ENCODE measurements at regions of chr6 and their contacts with region 1.

Region 1: DNA sequence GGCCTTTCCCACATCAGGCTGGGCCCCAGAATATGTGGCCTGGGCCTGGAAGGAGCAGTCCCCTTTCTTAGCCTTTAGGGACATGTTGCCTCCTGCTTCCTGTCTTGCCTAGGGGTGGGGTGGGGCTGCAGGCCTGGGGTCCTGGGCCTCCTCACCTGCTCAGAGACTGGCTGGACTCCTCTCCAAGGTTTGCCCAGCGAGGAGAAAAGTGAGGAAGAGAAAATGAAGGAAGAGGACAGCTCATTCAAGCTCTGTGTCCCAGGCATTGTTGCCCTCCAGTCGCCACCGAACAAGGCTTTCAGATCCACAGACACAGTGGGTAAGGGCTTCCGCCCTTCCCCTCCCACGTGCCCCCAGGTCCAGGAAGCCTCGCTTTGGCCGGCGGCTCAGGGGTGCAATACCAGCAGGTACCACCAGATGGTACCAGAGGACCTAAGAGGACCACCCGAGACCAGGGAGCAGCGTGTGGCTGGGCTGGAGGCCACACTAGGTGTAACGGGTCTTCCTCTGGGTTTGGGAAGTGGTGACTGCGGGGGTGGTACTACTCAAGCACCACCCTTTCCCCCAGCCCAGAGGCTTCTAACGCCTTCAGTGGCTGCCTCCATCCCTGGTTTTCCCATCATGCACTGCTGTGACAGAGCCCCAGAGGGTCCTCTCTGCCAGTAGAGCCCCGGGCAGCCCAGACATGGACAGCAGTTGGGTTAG is 5.5 kb upstream of the BAK1 start:
- DNase-seq: peak; percentile 78 to 89 (median 83)
- H3K4me3 ChIP-seq: no peak overlapping the region
- H3K4me3 Mint-ChIP-seq: peak overlapping the region in 7 of 8 donors; percentile 28 to 66 (median 59)
- H3K27ac ChIP-seq: peak overlapping the region; percentile 47
- H3K27ac Mint-ChIP-seq: peak overlapping the region; percentile 85 to 93 (median 89)
- H3K4me1 ChIP-seq: peaks cover 18% of the 10 kb centered on the region
- H3K4me1 Mint-ChIP-seq: peaks cover 8 to 34% (median 17%) of the 10 kb centered on the region in 4 donors
- H3K27me3 ChIP-seq: no peaks in the 10 kb centered on the region
- H3K27me3 Mint-ChIP-seq: no peaks in the 10 kb centered on the region

Region 2: GRCh38 chr6:33570806-33571636 is 14.5 kb before region 1 on chr6:
- CTCF ChIA-PET with region 1: interaction called, 20 read pairs
- POLR2A ChIA-PET with region 1: interaction called, 5 read pairs
- intact Hi-C with region 1: loop called (anchors 1 kb)
- DNase-seq: peak; percentile 92 to 98 (median 95)
- H3K4me3 ChIP-seq: peak overlapping the region; percentile 13 to 72
- H3K4me3 Mint-ChIP-seq: peak overlapping the region; percentile 90 to 97 (median 94)
- H3K27ac ChIP-seq: peak overlapping the region; percentile 93
- H3K27ac Mint-ChIP-seq: peak overlapping the region; percentile 99 to 100 (median 100)
- H3K4me1 ChIP-seq: peaks cover 23% of the 10 kb centered on the region
- H3K4me1 Mint-ChIP-seq: peaks cover 12 to 44% (median 31%) of the 10 kb centered on the region in 4 donors
- H3K27me3 ChIP-seq: no peaks in the 10 kb centered on the region
- H3K27me3 Mint-ChIP-seq: no peaks in the 10 kb centered on the region

Region 3: DNA sequence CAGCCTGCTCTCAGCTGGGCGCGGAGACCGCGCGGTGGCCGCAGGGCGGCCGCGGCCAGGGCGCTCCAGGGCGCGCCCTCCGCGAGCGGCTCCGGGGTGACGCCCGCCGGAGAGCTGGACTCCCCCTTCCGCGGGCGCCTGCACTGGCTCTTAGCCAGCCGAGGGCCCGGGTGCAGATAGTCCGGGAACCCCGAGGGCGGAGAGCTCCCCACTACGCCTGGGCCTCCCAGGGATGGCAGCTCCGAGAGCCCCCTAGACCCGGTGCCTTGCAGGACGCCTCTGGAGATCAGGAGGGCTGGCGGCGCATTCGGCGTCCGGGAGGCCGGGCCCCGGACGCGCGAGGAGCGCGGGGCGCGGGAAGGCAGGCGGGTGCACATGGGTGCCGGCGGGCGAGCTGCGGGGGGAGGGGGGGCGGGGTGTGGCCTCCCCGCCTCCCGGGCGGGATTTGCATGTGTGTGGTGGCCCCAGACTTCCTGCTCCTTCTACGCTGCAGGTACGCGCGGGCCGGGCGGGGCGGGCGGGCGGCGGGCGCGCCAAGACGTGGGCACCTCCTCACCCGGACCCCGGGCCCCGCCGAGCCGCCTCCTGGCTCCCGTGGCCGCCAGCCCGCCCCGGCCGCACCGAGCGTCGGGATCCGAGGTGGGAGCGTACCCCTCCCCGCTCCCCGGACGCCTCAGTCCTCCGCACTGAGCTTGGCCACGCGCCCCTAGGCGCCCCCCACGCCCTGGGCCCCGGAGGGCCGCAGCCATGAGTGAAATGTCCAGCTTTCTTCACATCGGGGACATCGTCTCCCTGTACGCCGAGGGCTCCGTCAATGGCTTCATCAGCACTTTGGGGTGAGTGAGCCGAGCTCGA is 35.5 kb after region 1 on chr6 and contains the start of gene ITPR3:
- CTCF ChIA-PET with region 1: interaction called, 24 read pairs
- POLR2A ChIA-PET with region 1: interaction called, 29 read pairs
- intact Hi-C with region 1: no loop called
- DNase-seq: peak; percentile 78 to 85 (median 83)
- H3K4me3 ChIP-seq: peak within 1 kb of the TSS; percentile 71 to 88
- H3K4me3 Mint-ChIP-seq: peak within 1 kb of the TSS; percentile 93 to 99 (median 96)
- H3K27ac ChIP-seq: peak within 1 kb of the TSS; percentile 92
- H3K27ac Mint-ChIP-seq: peak within 1 kb of the TSS; percentile 91 to 98 (median 97)
- H3K4me1 ChIP-seq: peaks cover 48% of the 10 kb centered on the region
- H3K4me1 Mint-ChIP-seq: peaks cover 35 to 62% (median 48%) of the 10 kb centered on the region in 4 donors
- H3K27me3 ChIP-seq: no peaks in the 10 kb centered on the region
- H3K27me3 Mint-ChIP-seq: no peaks in the 10 kb centered on the region
- total RNA-seq, gene ITPR3: 71.2 to 72.4 TPM

Region 4: GRCh38 chr6:33694401-33694931 is 108.9 kb after region 1 on chr6:
- CTCF ChIA-PET with region 1: interaction called, 19 read pairs
- POLR2A ChIA-PET with region 1: interaction called, 6 read pairs
- intact Hi-C with region 1: no loop called
- DNase-seq: peak; percentile 58 to 86 (median 67)
- H3K4me3 ChIP-seq: no peak overlapping the region
- H3K4me3 Mint-ChIP-seq: peak overlapping the region in 7 of 8 donors; percentile 69 to 89 (median 69)
- H3K27ac ChIP-seq: peak overlapping the region; percentile 76
- H3K27ac Mint-ChIP-seq: peak overlapping the region; percentile 97 to 99 (median 98)
- H3K4me1 ChIP-seq: peaks cover 65% of the 10 kb centered on the region
- H3K4me1 Mint-ChIP-seq: peaks cover 36 to 84% (median 59%) of the 10 kb centered on the region in 4 donors
- H3K27me3 ChIP-seq: no peaks in the 10 kb centered on the region
- H3K27me3 Mint-ChIP-seq: no peaks in the 10 kb centered on the region

Region 5: DNA sequence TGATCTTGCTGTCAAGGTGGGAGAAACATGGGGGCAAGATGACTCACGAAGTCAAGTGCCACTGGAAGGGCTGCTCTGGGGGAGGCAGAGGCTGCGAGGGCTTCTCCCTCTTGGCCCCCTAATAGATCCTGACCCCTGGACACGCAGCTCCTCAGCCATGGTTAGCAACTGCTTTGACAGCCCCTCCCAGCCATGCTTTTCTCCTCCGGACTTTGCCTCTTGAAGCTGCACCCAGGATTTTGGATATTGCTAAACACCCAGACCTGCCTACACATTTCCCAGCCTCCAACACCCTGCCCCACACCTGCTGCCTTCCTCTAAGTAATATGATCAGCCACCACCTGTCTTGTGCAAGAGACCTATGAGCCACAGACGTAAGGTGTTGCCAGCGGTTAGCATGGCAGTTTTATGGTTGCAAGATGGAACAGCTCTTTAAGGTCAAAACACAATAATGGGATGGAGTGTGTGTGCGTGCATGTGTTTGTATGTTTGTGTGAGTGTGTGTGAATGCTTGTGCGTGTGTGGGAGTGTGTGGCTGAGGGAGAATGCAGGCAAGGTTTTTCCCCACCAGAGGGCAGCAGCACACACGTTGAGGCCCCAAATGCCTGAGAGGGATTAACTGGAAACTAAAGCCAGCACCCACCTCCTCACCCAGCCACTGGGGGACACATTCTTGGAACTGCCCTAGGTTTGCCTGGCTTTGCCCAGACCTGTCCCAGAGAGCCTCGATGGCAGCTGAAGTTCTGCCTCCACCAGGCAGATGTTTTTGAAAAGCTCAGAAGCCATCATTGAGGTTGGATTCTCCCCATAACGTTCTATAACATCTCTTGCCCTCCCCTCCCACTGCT is 158.7 kb after region 1 on chr6:
- CTCF ChIA-PET with region 1: interaction called, 15 read pairs
- POLR2A ChIA-PET with region 1: no interaction called
- intact Hi-C with region 1: loop called (anchors 2 kb)
- DNase-seq: peak; percentile 57 to 68 (median 66)
- H3K4me3 ChIP-seq: no peak overlapping the region
- H3K4me3 Mint-ChIP-seq: no peak overlapping the region
- H3K27ac ChIP-seq: no peak overlapping the region
- H3K27ac Mint-ChIP-seq: no peak overlapping the region
- H3K4me1 ChIP-seq: no peaks in the 10 kb centered on the region
- H3K4me1 Mint-ChIP-seq: peaks cover 0 to 4% (median 3%) of the 10 kb centered on the region in 4 donors
- H3K27me3 ChIP-seq: peaks cover 7% of the 10 kb centered on the region
- H3K27me3 Mint-ChIP-seq: peaks cover 0 to 7% of the 10 kb centered on the region in 2 donors

Region 6: GRCh38 chr6:34154668-34155447 is 569.3 kb after region 1 on chr6:
- CTCF ChIA-PET with region 1: no interaction called
- POLR2A ChIA-PET with region 1: no interaction called
- intact Hi-C with region 1: loop called (anchors 5 kb)
- DNase-seq: peak; percentile 49 to 64 (median 58)
- H3K4me3 ChIP-seq: no peak overlapping the region
- H3K4me3 Mint-ChIP-seq: peak overlapping the region in 5 of 8 donors; percentile 35 to 74 (median 66)
- H3K27ac ChIP-seq: no peak overlapping the region
- H3K27ac Mint-ChIP-seq: no peak overlapping the region
- H3K4me1 ChIP-seq: peaks cover 10% of the 10 kb centered on the region
- H3K4me1 Mint-ChIP-seq: peaks cover 0 to 8% (median 2%) of the 10 kb centered on the region in 4 donors
- H3K27me3 ChIP-seq: peaks cover 22% of the 10 kb centered on the region
- H3K27me3 Mint-ChIP-seq: peaks cover 25 to 27% of the 10 kb centered on the region in 2 donors

Measured in CD4-positive, alpha-beta memory T cell (primary cell).